K562 (cell line): ENCODE measurements at regions of chr17 and their contacts with region 1.

Region 1: GRCh38 chr17:39980351-39981206 is at the start of gene PSMD3:
- DNase-seq: peak; percentile 92 to 99 (median 94)
- ATAC-seq: peak; percentile 93
- H3K4me3 ChIP-seq: peak within 1 kb of the TSS; percentile 98
- H3K27ac ChIP-seq: peak within 1 kb of the TSS; percentile 98
- H3K4me1 ChIP-seq: peaks cover 5 to 12% of the 10 kb centered on the region in 2 experiments; a peak in 3 of 5 replicates
- H3K27me3 ChIP-seq: no peaks in the 10 kb centered on the region
- CTCF ChIP-seq: peak; percentile 89 to 97 (median 92)
- EP300 ChIP-seq: peak; percentile 79
- POLR2A ChIP-seq: peak; percentile 85
- RAD21 ChIP-seq: peak; percentile 87 to 91
- polyA plus RNA-seq, gene PSMD3: 2.0 to 2.8 TPM

Region 2: GRCh38 chr17:39916918-39917317 is 63.7 kb before region 1 on chr17:
- CTCF ChIA-PET with region 1: no interaction called
- POLR2A ChIA-PET with region 1: interaction called, 3 read pairs
- in situ Hi-C with region 1: no loop called
- intact Hi-C with region 1: loop called (anchors 1 kb)
- DNase-seq: peak; percentile 42 to 53 (median 48)
- ATAC-seq: peak; percentile 77
- H3K4me3 ChIP-seq: no peak overlapping the region
- H3K27ac ChIP-seq: no peak overlapping the region
- H3K4me1 ChIP-seq: peaks cover 8 to 15% of the 10 kb centered on the region in 2 experiments; a peak in 4 of 5 replicates
- H3K27me3 ChIP-seq: no peaks in the 10 kb centered on the region
- CTCF ChIP-seq: peak; percentile 38 to 57 (median 45); a peak in 5 of 6 replicates
- EP300 ChIP-seq: no peak
- POLR2A ChIP-seq: no peak
- RAD21 ChIP-seq: peak in 1 of 2 experiments; percentile 48; a peak in 2 of 4 replicates

Region 3: DNA sequence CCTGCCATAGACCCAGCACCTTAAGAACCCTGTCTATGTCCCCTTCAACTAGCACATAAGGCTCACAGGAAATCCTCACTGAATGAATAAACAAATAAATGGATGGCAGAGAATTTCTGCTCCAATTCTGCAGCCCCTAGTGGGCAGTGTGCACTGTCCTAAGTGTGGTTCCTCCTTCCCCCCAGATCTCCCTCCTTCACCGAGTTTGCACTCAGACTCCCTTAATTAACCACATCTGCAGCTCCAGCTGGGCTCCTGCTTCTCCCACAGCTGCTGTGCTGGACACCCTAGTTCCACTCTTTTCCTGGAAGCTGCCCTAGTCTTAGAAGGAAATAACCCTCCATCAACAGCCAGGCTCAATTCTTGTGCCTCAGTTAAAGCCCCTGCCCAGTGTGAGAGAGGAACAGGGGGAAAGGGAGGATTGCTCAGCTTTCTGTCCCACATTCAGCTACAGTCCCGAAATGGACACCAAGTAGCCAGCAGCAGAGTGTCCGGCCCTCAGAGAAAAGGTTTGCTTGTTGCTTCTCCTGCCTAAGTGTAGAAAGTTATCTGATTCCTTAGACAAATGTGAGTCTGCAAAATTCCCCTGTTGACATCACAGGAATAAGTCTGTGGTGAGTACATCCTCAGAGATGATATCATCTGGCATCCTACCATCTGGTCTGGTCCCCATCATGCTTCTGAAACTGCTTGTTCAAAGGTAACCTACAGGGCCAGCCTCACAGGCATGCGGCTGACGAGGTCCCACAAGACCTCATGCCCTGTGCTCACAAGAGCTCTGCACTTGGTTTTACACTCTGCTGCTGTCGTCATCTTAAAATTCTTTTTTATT is 40.8 kb before region 1 on chr17:
- CTCF ChIA-PET with region 1: interaction called, 7 read pairs
- POLR2A ChIA-PET with region 1: interaction called, 4 read pairs
- in situ Hi-C with region 1: no loop called
- intact Hi-C with region 1: loop called (anchors 1 kb)
- DNase-seq: peak; percentile 47 to 60 (median 56)
- ATAC-seq: peak; percentile 86
- H3K4me3 ChIP-seq: no peak overlapping the region
- H3K27ac ChIP-seq: peak overlapping the region; percentile 47; the same call in 2 of the 3 replicates
- H3K4me1 ChIP-seq: peaks cover 21 to 24% of the 10 kb centered on the region in 2 experiments
- H3K27me3 ChIP-seq: peaks cover 4 to 7% of the 10 kb centered on the region in 2 experiments; a peak in 4 of 5 replicates
- CTCF ChIP-seq: peak; percentile 65 to 85 (median 73)
- EP300 ChIP-seq: 0 out of 2 replicates have a peak, but pooled peaks have one; percentile 23
- POLR2A ChIP-seq: no peak
- RAD21 ChIP-seq: peak; percentile 25 to 55; a peak in 3 of 4 replicates

Region 4: DNA sequence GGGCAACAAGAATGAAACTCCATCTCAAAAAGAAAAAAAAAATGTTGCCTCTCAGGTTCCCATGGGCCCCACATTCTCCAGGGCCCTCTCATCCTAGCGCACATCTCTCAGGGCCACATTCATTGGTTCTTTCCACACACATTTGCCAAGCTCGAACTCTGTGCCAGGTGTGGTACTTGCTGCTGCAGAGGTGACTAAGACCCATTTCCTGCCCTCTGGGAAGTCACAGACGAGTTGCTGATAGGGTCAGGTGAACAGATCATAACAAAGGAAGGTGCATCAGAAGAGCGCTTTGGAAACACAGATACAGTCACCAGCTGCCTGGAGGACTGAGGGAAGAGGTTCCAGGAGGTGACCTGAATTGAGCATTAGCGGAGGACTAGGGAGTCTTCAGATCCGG is 16.8 kb before region 1 on chr17:
- CTCF ChIA-PET with region 1: interaction called, 13 read pairs
- POLR2A ChIA-PET with region 1: interaction called, 9 read pairs
- in situ Hi-C with region 1: no loop called
- intact Hi-C with region 1: loop called (anchors 1 kb)
- DNase-seq: no peak
- ATAC-seq: no peak
- H3K4me3 ChIP-seq: no peak overlapping the region
- H3K27ac ChIP-seq: no peak overlapping the region
- H3K4me1 ChIP-seq: peaks cover 2 to 14% of the 10 kb centered on the region in 2 experiments; a peak in 4 of 5 replicates
- H3K27me3 ChIP-seq: peaks cover 6 to 13% of the 10 kb centered on the region in 2 experiments; a peak in 3 of 5 replicates
- CTCF ChIP-seq: no peak
- EP300 ChIP-seq: no peak
- POLR2A ChIP-seq: no peak
- RAD21 ChIP-seq: no peak

Region 5: DNA sequence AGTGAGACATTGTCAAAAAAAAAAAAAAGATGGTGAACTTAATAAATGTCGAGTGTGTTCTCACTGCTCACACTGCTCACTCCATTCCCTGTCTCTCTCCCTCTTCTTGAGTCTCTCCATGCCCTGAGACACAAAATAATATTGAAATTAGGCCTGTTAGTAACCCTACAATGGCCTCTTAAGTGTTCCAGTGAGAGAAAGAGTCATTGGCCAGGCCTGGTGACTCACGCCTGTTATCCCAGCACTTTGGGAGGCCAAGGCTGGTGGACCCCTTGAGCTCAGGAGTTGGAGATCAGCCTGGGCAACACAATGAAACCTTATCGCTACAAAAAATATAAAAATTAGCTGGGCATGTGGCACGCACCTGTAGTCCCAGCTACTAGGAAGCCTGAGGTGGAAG is 18.5 kb after region 1 on chr17:
- CTCF ChIA-PET with region 1: no interaction called
- POLR2A ChIA-PET with region 1: interaction called, 14 read pairs
- in situ Hi-C with region 1: no loop called
- intact Hi-C with region 1: no loop called
- DNase-seq: no peak
- ATAC-seq: no peak
- H3K4me3 ChIP-seq: no peak overlapping the region
- H3K27ac ChIP-seq: no peak overlapping the region
- H3K4me1 ChIP-seq: peaks cover 0 to 3% of the 10 kb centered on the region in 2 experiments; a peak in 1 of 5 replicates
- H3K27me3 ChIP-seq: no peaks in the 10 kb centered on the region
- CTCF ChIP-seq: no peak
- EP300 ChIP-seq: no peak
- POLR2A ChIP-seq: no peak
- RAD21 ChIP-seq: no peak